ENCODE measurements at regions of chr16 and their contacts with region 1.

Region 1: DNA sequence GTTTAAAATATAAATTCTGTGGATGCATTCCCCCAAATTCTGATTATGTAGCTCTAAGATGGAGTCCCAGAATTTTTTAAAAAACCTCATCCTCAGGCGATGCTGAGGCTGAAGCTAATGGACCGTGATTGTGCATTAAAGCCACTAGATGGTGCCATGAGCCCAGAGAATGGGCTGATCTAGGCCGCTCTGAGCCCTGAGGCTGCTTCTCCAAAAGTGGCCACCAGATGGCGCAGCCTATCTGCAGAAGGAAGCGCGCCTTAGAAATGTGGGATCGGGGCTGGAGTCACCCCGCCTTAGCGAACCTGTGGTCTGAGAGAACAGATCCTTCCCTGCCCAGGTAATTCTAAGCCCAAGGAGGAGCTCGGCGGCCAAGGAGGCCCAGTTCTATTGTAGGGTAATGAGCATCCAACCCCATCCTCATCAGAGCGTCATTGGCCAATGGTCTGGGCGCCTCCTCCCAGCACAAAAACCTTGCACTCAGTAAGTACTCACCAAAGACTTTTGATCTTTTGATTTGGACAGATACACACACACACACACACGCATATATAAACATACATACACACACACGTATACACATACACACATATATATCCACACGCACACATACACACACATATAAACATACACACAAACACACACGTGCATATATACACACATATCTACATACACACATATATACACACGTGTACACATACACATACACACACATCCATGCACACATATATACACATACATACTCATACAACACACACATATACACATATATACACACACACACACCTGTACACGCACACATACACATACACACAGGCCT is 13.7 kb upstream of the MMP2 start:
- DNase-seq: peak; percentile 87
- ATAC-seq: peak; percentile 95
- H3K4me3 Mint-ChIP-seq: no peak overlapping the region
- H3K27ac Mint-ChIP-seq: no peak overlapping the region
- H3K4me1 Mint-ChIP-seq: peaks cover 3% of the 10 kb centered on the region
- H3K27me3 Mint-ChIP-seq: no peaks in the 10 kb centered on the region

Region 2: DNA sequence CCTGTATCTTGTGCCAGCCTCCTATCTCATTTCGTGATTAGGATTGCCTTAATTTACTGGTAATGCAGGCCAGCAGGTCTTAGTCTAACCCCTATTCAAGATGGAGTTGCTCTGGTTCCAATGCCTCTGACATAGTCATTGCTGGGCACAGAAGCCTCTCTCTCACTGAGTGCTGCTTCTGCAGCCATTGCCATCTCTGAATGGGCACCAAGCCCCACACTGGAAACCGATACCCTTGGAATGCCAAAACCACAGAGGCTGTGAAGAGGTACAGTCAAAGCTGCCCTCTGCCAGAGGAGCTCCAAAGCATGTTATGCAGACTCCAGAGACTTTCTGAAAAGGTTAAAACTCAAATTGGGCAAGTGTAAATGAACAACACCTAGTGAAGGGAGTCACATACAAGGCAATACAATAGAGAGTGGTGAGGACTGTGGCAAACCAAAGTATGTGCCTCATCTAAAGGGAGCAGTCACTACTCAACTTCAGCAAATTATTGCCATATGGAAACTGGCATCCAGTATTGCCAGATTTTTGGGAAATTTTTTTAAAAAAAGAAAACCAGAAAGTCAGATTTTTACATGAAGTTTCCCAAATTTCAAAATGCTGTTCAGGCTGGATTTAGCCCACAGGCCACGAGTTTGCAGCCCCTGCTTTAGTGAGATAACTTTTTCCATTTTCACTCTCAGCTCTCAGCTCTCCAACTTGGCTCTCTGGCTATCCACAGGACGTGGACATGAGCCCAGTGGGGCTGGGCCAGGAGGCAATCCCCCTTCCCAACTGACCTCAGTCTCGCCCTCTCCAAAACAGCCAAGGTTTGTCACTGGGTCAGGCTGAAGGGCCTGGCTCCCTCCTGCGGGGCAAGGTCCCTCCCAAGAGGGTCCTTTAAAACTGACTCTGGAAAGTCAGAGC is 11.6 kb after region 1 on chr16:
- CTCF ChIA-PET with region 1: interaction called, 22 read pairs
- DNase-seq: no peak
- ATAC-seq: no peak
- H3K4me3 Mint-ChIP-seq: no peak overlapping the region
- H3K27ac Mint-ChIP-seq: no peak overlapping the region
- H3K4me1 Mint-ChIP-seq: peaks cover 8% of the 10 kb centered on the region
- H3K27me3 Mint-ChIP-seq: peaks cover 38% of the 10 kb centered on the region

Region 3: GRCh38 chr16:55502801-55503366 is 37.6 kb after region 1 on chr16:
- CTCF ChIA-PET with region 1: interaction called, 12 read pairs
- DNase-seq: no peak
- ATAC-seq: no peak
- H3K4me3 Mint-ChIP-seq: no peak overlapping the region
- H3K27ac Mint-ChIP-seq: no peak overlapping the region
- H3K4me1 Mint-ChIP-seq: peaks cover 9% of the 10 kb centered on the region
- H3K27me3 Mint-ChIP-seq: peaks cover 13% of the 10 kb centered on the region

Region 4: GRCh38 chr16:55701442-55702319 is 236.4 kb after region 1 on chr16:
- CTCF ChIA-PET with region 1: interaction called, 119 read pairs
- DNase-seq: peak; percentile 50
- ATAC-seq: peak; percentile 69
- H3K4me3 Mint-ChIP-seq: no peak overlapping the region
- H3K27ac Mint-ChIP-seq: no peak overlapping the region
- H3K4me1 Mint-ChIP-seq: peaks cover 13% of the 10 kb centered on the region
- H3K27me3 Mint-ChIP-seq: peaks cover 12% of the 10 kb centered on the region

Region 5: DNA sequence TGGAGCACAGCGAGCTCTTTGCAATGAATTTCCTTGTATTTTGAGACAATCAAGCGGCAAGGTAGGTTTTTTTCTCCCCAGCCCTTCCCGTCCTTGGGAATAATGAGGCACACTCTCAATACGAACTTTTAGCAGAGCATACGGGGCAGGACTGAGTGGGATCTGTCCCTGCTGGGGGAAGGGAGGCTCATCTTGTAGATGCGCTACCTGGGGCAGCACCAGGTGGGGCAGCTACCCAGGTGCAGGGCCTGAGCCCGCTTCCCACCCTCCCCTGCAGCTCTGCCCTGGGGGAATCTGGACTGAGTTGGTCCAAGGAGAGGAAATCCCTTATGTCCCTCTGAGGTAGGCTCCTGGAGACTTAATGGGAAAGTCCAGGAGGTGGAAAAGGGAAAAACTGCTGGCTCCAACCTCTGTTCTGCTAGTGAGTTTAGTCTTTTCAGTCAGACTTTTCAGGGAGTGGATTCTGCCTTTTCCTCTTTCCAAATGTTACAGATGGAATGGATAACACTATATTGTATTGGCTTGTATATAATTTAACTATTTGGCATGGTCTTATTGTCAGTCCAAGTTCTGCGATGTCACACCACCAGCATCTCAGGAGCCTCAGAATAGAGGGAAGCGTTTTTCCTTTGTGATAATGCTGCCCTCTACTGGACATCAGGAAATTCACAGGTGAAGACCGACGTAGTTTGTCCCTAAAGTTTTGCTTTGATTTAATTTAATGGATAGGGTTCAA is 377.2 kb after region 1 on chr16:
- CTCF ChIA-PET with region 1: interaction called, 18 read pairs
- DNase-seq: no peak
- ATAC-seq: no peak
- H3K4me3 Mint-ChIP-seq: no peak overlapping the region
- H3K27ac Mint-ChIP-seq: no peak overlapping the region
- H3K4me1 Mint-ChIP-seq: peaks cover 9% of the 10 kb centered on the region
- H3K27me3 Mint-ChIP-seq: peaks cover 20% of the 10 kb centered on the region

Measured in activated CD8-positive, alpha-beta memory T cell treated with anti-CD3 and anti-CD28 coated beads, Interleukin-2, amount 10 ng/mL, durations not matched to agents 7 days and 5 days (primary cell).